ENCODE measurements at regions of chr10 and their contacts with region 1.

Region 1: GRCh38 chr10:108275895-108276685 is 1111.6 kb upstream of the SORCS1 start:
- DNase-seq: no peak
- H3K4me3 ChIP-seq: no peak overlapping the region
- H3K27ac ChIP-seq: no peak overlapping the region
- H3K4me1 ChIP-seq: no peaks in the 10 kb centered on the region
- H3K27me3 ChIP-seq: no peaks in the 10 kb centered on the region
- CTCF ChIP-seq: no peak
- EP300 ChIP-seq: no peak
- POLR2A ChIP-seq: no peak

Region 2: DNA sequence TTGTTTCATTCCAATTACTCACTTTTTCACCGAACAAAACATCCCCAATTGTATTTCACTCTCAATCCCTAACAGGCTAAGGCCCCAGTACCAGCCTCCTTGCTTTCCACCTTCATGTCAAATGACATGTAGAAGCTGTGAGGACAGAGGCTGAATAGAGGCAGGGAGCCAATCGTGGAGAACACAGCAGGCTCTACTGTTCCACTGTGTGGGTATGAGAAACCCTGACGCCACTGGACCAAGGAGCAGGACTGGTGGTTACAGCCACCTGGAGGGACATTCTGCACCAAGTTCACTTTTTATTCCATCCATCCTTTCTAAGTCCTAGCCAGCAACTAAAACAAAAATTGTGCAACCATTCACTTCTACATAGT is 1614.3 kb before region 1 on chr10:
- in situ Hi-C with region 1: no loop called
- intact Hi-C with region 1: loop called (anchors 5 kb)
- DNase-seq: no peak
- H3K4me3 ChIP-seq: no peak overlapping the region
- H3K27ac ChIP-seq: no peak overlapping the region
- H3K4me1 ChIP-seq: no peaks in the 10 kb centered on the region
- H3K27me3 ChIP-seq: no peaks in the 10 kb centered on the region
- CTCF ChIP-seq: no peak
- EP300 ChIP-seq: no peak
- POLR2A ChIP-seq: no peak

Region 3: DNA sequence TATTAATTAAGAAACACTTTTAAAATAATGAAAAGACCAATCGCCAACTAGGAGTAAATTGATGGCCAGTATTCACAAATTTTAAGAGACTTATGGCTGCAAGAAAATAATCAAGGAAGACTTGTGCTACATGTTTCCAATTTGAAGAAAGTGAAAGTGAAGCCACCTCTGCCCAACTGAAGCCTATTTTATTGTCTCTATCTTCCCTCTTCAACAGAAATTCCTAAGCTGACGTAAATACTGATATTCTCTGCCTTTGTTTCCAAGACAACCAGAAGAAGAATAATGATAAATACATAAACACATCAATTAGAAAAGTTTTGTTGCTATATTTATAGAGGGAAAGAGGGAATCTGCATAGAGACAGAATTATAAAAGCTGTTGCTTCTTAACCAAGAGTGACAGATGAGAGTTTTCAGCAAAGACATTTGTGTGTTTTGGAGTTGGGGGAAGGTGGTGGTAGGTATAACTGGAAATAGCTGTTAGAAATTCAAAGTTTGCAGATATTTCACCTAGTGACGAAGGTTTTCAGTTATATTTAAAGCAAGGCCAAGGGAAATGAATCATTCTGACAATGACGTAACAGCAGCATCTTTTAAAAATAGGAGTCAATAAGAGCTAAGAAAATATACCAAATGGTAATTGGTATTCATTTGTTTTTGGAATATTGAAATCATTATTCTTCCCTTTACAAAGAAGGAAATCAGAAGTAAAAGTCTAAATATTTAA is 535.0 kb before region 1 on chr10:
- in situ Hi-C with region 1: no loop called
- intact Hi-C with region 1: no loop called
- DNase-seq: no peak
- H3K4me3 ChIP-seq: no peak overlapping the region
- H3K27ac ChIP-seq: no peak overlapping the region
- H3K4me1 ChIP-seq: peaks cover 0 to 8% (median 0%) of the 10 kb centered on the region in 4 donors
- H3K27me3 ChIP-seq: no peaks in the 10 kb centered on the region
- CTCF ChIP-seq: no peak
- EP300 ChIP-seq: no peak
- POLR2A ChIP-seq: no peak

Region 4: DNA sequence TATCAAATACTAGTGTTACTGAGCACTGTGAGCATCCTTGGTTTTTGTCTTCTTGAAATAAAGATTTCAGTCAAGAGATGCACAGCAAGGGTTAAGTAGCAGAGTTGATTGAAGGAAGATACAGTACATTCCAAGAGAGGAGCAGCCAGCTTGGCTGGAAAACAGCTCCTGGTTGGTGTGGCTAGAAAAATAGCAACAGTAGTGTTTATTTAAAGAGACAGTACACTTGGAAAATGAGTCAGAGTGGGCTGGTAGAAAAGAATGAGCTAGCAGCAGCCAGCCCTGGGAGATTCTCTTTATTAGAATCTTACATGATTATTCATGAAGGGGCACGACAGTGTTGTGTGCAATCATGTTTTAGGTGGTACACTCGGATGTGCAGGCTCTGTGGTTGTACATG is 95.2 kb before region 1 on chr10:
- in situ Hi-C with region 1: no loop called
- intact Hi-C with region 1: no loop called
- DNase-seq: no peak
- H3K4me3 ChIP-seq: no peak overlapping the region
- H3K27ac ChIP-seq: no peak overlapping the region
- H3K4me1 ChIP-seq: no peaks in the 10 kb centered on the region
- H3K27me3 ChIP-seq: no peaks in the 10 kb centered on the region
- CTCF ChIP-seq: no peak
- EP300 ChIP-seq: no peak
- POLR2A ChIP-seq: no peak

Region 5: GRCh38 chr10:108673741-108674140 is 397.7 kb after region 1 on chr10:
- in situ Hi-C with region 1: no loop called
- intact Hi-C with region 1: no loop called
- DNase-seq: no peak
- H3K4me3 ChIP-seq: no peak overlapping the region
- H3K27ac ChIP-seq: no peak overlapping the region
- H3K4me1 ChIP-seq: no peaks in the 10 kb centered on the region
- H3K27me3 ChIP-seq: no peaks in the 10 kb centered on the region
- CTCF ChIP-seq: no peak
- EP300 ChIP-seq: no peak
- POLR2A ChIP-seq: no peak